ENCODE measurements at regions of chr7 and their contacts with region 1.

Region 1: DNA sequence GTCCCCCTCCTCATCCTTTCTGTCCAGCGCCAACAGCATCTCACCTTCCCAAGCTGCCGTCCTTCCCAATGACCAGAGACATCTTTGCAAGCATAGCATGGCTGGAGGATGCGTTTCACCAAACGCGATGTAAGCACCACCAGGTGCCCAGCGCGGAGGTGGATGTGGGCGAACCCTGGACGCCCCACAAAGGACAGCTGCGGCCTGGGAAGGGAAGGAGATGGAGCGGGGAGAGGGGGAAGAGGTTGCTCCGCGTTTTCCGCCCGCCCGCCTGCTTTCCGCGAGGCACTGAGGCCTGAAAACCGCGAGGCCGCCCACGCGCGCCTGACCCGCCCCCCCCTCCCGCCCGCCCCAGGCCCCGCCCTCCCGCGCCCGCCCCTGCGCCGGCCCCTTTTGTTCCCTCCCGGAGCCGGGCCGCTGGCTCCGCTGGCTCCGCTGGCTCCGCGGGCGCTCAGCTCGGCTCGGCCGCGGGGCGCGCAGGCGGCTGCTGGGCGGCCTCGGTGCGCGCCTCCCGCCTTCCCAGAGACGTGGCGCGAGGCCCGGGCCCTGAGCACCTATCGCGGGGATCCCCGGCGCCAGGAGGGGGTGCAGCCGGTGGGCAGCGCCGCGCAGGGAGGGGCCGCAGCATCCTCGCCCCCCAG is at the start of gene CLIP2:
- DNase-seq: peak; percentile 99
- H3K4me3 ChIP-seq: peak within 1 kb of the TSS; percentile 74 to 99
- H3K27ac ChIP-seq: peak within 1 kb of the TSS; percentile 65 to 68; a peak in 3 of 4 replicates
- H3K4me1 ChIP-seq: peaks cover 11 to 28% of the 10 kb centered on the region in 2 experiments; a peak in 3 of 4 replicates
- H3K27me3 ChIP-seq: no peaks in the 10 kb centered on the region
- CTCF ChIP-seq: no peak
- EP300 ChIP-seq: no peak
- RAD21 ChIP-seq: 0 out of 2 replicates have a peak, but pooled peaks have one; percentile 10
- polyA plus RNA-seq, gene CLIP2: 9.6 and 14.3 TPM in 2 replicates

Region 2: GRCh38 chr7:74272305-74273038 is 16.7 kb before region 1 on chr7:
- CTCF ChIA-PET with region 1: interaction called, 61 read pairs
- POLR2A ChIA-PET with region 1: no interaction called
- DNase-seq: peak; percentile 68
- H3K4me3 ChIP-seq: no peak overlapping the region
- H3K27ac ChIP-seq: peak overlapping the region; percentile 56 to 99
- H3K4me1 ChIP-seq: peaks cover 4 to 16% of the 10 kb centered on the region in 2 experiments; a peak in 3 of 4 replicates
- H3K27me3 ChIP-seq: no peaks in the 10 kb centered on the region
- CTCF ChIP-seq: no peak
- EP300 ChIP-seq: peak in 1 of 2 experiments; percentile 67; a peak in 2 of 4 replicates
- RAD21 ChIP-seq: no peak

Region 3: DNA sequence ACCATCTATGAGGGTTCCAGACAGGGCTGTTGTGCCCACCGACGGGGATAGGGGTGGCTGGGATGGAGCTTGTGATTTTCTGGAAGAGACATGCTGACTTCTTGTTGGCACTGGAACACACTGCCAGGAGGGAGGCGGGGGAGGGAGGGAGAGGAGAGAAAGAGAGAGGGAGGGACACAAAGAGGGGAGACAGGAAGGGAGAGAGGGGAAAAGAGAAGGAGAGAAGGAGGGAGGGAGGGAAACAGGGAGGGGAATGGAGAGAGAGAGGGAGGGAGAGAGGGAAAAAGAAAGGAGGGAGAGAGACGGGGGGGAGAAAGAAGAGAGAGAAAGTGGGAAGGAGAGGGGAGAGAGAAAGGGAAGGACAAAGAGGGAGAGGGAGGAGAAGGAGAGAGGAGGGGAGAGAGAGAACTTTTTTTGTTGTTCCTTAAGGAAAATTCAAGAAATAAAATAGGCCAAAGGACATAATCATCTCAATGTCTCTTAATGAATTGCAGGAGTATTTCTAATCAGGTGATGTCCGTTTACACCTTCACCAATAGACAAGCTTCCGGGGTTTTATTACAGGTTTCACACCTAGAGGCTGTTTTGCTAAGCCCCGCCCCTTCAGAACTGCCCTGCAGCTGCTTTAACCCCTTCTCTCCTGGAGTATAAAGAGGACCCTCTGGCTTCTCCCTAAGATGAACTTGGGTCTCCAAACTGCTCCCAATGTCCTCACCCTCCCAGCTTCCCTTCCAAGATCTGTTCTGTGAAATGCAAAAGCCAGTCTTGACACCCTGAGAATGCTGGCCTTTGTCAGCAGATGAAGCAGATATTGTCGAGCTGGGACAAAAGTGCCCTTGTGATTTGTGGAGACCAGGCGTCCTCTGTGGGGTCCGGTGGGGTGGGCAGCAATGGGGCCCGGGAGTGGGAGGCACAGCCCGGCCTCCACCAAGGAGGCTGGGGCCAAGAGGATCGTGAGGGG is 82.5 kb after region 1 on chr7:
- CTCF ChIA-PET with region 1: no interaction called
- POLR2A ChIA-PET with region 1: no interaction called
- DNase-seq: no peak
- H3K4me3 ChIP-seq: no peak overlapping the region
- H3K27ac ChIP-seq: 0 out of 4 replicates have a peak overlapping the region, but pooled peaks of 1 of the 2 experiments have one; percentile 4
- H3K4me1 ChIP-seq: no peaks in the 10 kb centered on the region; a peak in 1 of 4 replicates
- H3K27me3 ChIP-seq: no peaks in the 10 kb centered on the region
- CTCF ChIP-seq: no peak
- EP300 ChIP-seq: no peak
- RAD21 ChIP-seq: no peak

Measured in SK-N-SH (cell line).